Panc1 (cell line): ENCODE measurements at regions of chr1 and their contacts with region 1.

Region 1: GRCh38 chr1:9629445-9630201 is 21.9 kb upstream of the PIK3CD start:
- DNase-seq: no peak
- ATAC-seq: no peak
- H3K4me3 ChIP-seq: no peak overlapping the region
- H3K27ac ChIP-seq: no peak overlapping the region
- H3K4me1 ChIP-seq: no peaks in the 10 kb centered on the region; the same call in 1 of the 2 replicates
- H3K27me3 ChIP-seq: no peaks in the 10 kb centered on the region
- CTCF ChIP-seq: no peak

Region 2: GRCh38 chr1:9510130-9510529 is 119.5 kb before region 1 on chr1:
- CTCF ChIA-PET with region 1: no interaction called
- POLR2A ChIA-PET with region 1: no interaction called
- in situ Hi-C with region 1: no loop called
- intact Hi-C with region 1: no loop called
- DNase-seq: no peak
- ATAC-seq: no peak
- H3K4me3 ChIP-seq: no peak overlapping the region
- H3K27ac ChIP-seq: no peak overlapping the region
- H3K4me1 ChIP-seq: no peaks in the 10 kb centered on the region
- H3K27me3 ChIP-seq: no peaks in the 10 kb centered on the region
- CTCF ChIP-seq: no peak

Region 3: DNA sequence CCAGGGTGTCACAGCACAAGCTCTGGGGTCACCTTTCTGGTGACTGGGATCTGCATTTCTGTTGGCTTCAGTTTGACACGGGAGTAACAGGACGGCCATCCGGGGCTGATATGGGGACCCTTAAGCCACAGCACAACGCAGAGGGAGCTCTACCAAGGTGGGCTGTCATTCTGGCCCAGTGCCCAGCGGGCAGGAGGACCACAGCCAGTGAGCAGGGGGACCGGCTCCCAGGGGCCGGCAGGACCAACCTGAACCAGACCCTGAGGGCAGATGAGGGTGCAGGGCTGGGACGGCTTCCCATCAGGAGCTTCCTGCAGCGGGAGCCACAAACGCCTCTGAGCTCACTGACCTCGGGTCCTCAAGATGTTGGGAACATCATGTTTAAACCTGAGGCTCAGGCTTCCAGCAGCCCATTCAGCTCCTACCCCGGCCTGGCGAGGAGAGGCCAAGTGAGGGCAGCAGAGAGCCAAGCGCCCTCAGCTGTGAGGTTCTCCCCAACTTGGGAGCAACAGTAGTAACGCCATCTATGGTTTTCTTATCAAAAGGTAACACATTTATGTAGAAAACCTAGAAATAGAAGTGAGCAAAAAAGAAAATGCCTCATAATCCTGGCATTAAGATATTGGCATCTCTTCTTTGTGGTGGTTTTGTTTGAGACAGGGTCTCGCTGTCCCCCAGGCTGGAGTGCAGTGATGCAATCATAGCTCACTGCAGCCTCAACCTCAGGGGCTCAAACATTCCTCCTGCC is 14.1 kb before region 1 on chr1:
- CTCF ChIA-PET with region 1: interaction called, 11 read pairs
- POLR2A ChIA-PET with region 1: no interaction called
- in situ Hi-C with region 1: no loop called
- intact Hi-C with region 1: no loop called
- DNase-seq: peak; percentile 35
- ATAC-seq: peak; percentile 86
- H3K4me3 ChIP-seq: no peak overlapping the region
- H3K27ac ChIP-seq: no peak overlapping the region
- H3K4me1 ChIP-seq: no peaks in the 10 kb centered on the region
- H3K27me3 ChIP-seq: no peaks in the 10 kb centered on the region
- CTCF ChIP-seq: peak; percentile 91

Region 4: GRCh38 chr1:9643351-9644256 is 14.0 kb after region 1 on chr1:
- CTCF ChIA-PET with region 1: interaction called, 12 read pairs
- POLR2A ChIA-PET with region 1: interaction called, 5 read pairs
- in situ Hi-C with region 1: no loop called
- intact Hi-C with region 1: no loop called
- DNase-seq: no peak
- ATAC-seq: no peak
- H3K4me3 ChIP-seq: no peak overlapping the region
- H3K27ac ChIP-seq: no peak overlapping the region
- H3K4me1 ChIP-seq: peaks cover 5% of the 10 kb centered on the region; the same call in 1 of the 2 replicates
- H3K27me3 ChIP-seq: no peaks in the 10 kb centered on the region
- CTCF ChIP-seq: no peak

Region 5: GRCh38 chr1:9689011-9689706 is 59.5 kb after region 1 on chr1:
- CTCF ChIA-PET with region 1: interaction called, 7 read pairs
- POLR2A ChIA-PET with region 1: no interaction called
- in situ Hi-C with region 1: no loop called
- intact Hi-C with region 1: loop called (anchors 5 kb)
- DNase-seq: no peak
- ATAC-seq: peak; percentile 86
- H3K4me3 ChIP-seq: peak overlapping the region; percentile 50 to 82
- H3K27ac ChIP-seq: no peak overlapping the region
- H3K4me1 ChIP-seq: peaks cover 26% of the 10 kb centered on the region
- H3K27me3 ChIP-seq: no peaks in the 10 kb centered on the region
- CTCF ChIP-seq: no peak

Region 6: DNA sequence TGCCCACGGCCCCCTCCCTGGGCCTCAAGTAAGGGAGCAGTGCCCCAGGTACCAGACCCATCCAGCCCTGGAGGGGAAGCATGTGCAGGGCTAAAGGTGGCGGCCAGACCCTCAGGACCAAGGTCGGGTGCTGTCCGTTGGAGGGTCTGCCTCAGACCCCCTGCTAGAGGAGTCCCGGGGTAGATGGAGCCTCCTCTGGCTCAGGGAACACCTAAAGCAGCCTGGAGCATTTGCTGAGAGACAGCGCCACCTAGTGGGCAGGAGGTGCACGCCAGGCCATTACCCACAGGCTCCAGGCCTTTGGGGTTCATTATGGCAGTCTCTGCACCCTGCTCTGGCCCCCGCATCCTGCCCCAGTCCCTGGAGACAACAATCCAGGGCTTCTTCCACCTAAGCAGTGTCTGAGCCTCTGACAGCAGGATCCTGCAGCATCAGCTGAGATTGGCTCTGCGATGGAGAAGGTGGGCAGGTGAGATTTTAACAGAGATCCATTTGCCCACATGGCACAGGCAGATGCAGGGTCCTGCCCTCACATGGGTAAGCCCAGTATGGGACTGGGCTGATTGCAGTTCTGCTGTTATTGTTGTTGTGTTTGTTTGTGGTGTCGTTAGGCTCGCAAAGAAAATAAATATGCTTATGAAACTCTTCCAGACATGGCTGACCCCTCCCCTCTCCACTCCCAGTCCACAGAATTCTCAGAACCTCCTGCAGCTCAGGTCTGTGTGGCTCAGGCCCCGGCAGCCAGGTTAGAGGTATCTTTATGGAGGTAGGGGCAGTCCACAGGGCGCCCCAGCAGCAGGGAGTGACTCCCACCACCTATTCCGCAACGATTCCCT is 238.0 kb after region 1 on chr1:
- CTCF ChIA-PET with region 1: no interaction called
- POLR2A ChIA-PET with region 1: no interaction called
- in situ Hi-C with region 1: no loop called
- intact Hi-C with region 1: loop called (anchors 5 kb)
- DNase-seq: no peak
- ATAC-seq: peak; percentile 94
- H3K4me3 ChIP-seq: no peak overlapping the region
- H3K27ac ChIP-seq: no peak overlapping the region
- H3K4me1 ChIP-seq: no peaks in the 10 kb centered on the region
- H3K27me3 ChIP-seq: no peaks in the 10 kb centered on the region
- CTCF ChIP-seq: peak; percentile 97